Body of pancreas (tissue), 4 donors: ENCODE measurements at regions of chr21 and their contacts with region 1.

Region 1: GRCh38 chr21:38733973-38734546 is 71.7 kb upstream of the ETS2 start:
- DNase-seq: peak; percentile 80 to 87 (median 84)
- ATAC-seq: peak; percentile 86
- H3K4me3 ChIP-seq: no peak overlapping the region
- H3K27ac ChIP-seq: peak overlapping the region in 2 of 4 donors; percentile 13 to 24
- H3K4me1 ChIP-seq: no peaks in the 10 kb centered on the region
- H3K27me3 ChIP-seq: peaks cover 0 to 4% of the 10 kb centered on the region in 2 donors
- CTCF ChIP-seq: peak; percentile 86 to 96 (median 91)
- POLR2A ChIP-seq: no peak

Region 2: GRCh38 chr21:38805328-38806152 is 71.5 kb after region 1 on chr21 and contains the start of gene ETS2:
- intact Hi-C with region 1: no loop called
- DNase-seq: peak; percentile 87 to 93 (median 88)
- ATAC-seq: peak; percentile 89
- H3K4me3 ChIP-seq: peak within 1 kb of the TSS; percentile 44
- H3K27ac ChIP-seq: peak within 1 kb of the TSS; percentile 87 to 95 (median 92)
- H3K4me1 ChIP-seq: peaks cover 18% of the 10 kb centered on the region
- H3K27me3 ChIP-seq: no peaks in the 10 kb centered on the region
- CTCF ChIP-seq: peak in 1 of 7 experiments; percentile 6
- POLR2A ChIP-seq: peak; percentile 89 to 97 (median 97)
- total RNA-seq, gene ETS2: 17.9 to 25.7 TPM

Region 3: GRCh38 chr21:39029086-39029755 is 295.2 kb after region 1 on chr21:
- intact Hi-C with region 1: no loop called
- DNase-seq: no peak
- ATAC-seq: no peak
- H3K4me3 ChIP-seq: no peak overlapping the region
- H3K27ac ChIP-seq: no peak overlapping the region
- H3K4me1 ChIP-seq: no peaks in the 10 kb centered on the region
- H3K27me3 ChIP-seq: no peaks in the 10 kb centered on the region
- CTCF ChIP-seq: no peak
- POLR2A ChIP-seq: no peak

Region 4: DNA sequence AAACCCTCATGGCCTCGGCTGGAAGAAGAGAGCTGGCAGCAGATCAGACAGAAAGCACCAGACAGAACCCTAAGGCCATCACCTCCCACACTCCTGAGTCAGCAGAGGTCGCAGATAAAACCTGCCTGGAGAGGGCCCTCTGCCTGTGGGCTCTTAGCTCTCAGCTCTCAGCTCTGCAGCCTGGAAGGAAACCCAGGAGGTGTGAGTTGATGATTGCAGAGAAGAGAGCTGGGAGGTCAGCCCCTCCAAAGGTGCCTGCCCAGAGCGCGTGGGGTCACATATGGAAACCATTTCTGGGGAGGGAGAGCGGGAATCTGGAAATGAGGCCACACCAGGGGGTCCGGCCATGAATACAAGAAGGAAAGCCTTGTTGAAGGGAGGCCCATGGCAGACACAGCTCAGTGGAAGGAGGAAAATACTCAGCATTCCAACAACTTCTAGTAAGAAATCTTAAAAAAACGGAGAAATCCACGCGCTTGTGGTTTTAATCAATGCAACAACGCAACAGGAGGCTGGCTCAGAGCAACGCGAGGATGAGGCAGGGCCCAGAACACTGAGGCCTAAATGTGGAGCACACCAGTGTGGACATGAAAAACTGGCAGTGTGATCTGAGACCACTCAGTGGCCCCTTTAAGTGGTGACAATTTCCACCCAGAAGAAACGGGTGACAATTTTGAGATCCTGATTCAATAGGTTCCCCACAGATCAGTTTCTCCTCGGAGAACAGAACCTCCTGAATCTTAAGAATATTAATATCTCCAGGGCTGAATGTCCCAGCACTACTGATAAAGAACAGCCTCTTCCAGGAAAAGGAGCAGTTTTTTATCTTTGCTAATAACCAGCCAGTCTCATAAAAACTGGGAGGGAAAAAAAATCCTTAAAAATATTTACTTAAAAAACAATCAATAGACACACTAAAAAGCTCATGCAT is 403.5 kb after region 1 on chr21:
- intact Hi-C with region 1: loop called (anchors 5 kb)
- DNase-seq: no peak
- ATAC-seq: no peak
- H3K4me3 ChIP-seq: no peak overlapping the region
- H3K27ac ChIP-seq: no peak overlapping the region
- H3K4me1 ChIP-seq: no peaks in the 10 kb centered on the region
- H3K27me3 ChIP-seq: no peaks in the 10 kb centered on the region
- CTCF ChIP-seq: no peak
- POLR2A ChIP-seq: no peak